ENCODE measurements at regions of chr4 and their contacts with region 1.

Region 1: GRCh38 chr4:25986807-25987206 is 72.8 kb downstream of the SMIM20 start:
- DNase-seq: no peak
- ATAC-seq: no peak
- H3K4me3 Mint-ChIP-seq: no peak overlapping the region
- H3K27ac Mint-ChIP-seq: no peak overlapping the region
- H3K4me1 Mint-ChIP-seq: no peaks in the 10 kb centered on the region
- H3K27me3 Mint-ChIP-seq: peaks cover 6% of the 10 kb centered on the region
- CTCF ChIP-seq: no peak

Region 2: DNA sequence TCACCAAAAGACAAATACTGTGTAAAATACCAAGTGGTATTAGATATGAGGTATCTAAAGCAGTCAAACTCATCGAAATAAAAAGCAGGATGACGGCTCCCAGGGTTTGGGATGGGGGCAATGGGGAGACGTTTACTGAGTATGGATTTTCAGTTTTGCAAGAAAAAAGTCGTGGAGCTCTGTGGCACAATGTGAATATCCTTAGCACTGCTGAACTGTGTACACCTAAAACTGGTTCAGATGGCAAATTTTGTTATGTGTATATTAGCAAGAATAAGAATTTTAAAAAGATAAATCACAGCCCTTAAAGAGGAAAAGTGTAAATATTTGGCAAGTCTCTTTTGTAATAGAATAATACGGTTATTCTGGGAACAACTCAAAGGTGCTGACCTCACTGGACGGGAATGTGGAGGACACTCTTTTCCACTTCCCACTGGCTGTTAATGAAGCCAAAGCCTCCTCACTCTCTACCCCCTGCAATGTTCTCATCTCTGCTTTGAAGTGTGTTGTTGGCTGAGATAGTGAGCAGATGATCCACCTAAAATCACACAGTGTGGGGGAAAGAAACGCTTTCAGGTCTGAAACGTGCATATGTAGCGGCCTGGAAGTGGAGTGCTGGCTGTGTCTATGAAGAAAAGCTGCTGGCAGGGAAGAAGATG is 173.2 kb before region 1 on chr4:
- CTCF ChIA-PET with region 1: no interaction called
- POLR2A ChIA-PET with region 1: no interaction called
- intact Hi-C with region 1: no loop called
- DNase-seq: no peak
- ATAC-seq: no peak
- H3K4me3 Mint-ChIP-seq: no peak overlapping the region
- H3K27ac Mint-ChIP-seq: no peak overlapping the region
- H3K4me1 Mint-ChIP-seq: no peaks in the 10 kb centered on the region
- H3K27me3 Mint-ChIP-seq: no peaks in the 10 kb centered on the region
- CTCF ChIP-seq: no peak

Region 3: GRCh38 chr4:25948051-25948450 is 38.8 kb before region 1 on chr4:
- CTCF ChIA-PET with region 1: interaction called, 12 read pairs
- POLR2A ChIA-PET with region 1: no interaction called
- intact Hi-C with region 1: no loop called
- DNase-seq: no peak
- ATAC-seq: no peak
- H3K4me3 Mint-ChIP-seq: no peak overlapping the region
- H3K27ac Mint-ChIP-seq: no peak overlapping the region
- H3K4me1 Mint-ChIP-seq: peaks cover 9% of the 10 kb centered on the region
- H3K27me3 Mint-ChIP-seq: peaks cover 33% of the 10 kb centered on the region
- CTCF ChIP-seq: no peak

Region 4: GRCh38 chr4:25970226-25970675 is 16.6 kb before region 1 on chr4:
- CTCF ChIA-PET with region 1: interaction called, 20 read pairs
- POLR2A ChIA-PET with region 1: no interaction called
- intact Hi-C with region 1: no loop called
- DNase-seq: no peak
- ATAC-seq: no peak
- H3K4me3 Mint-ChIP-seq: no peak overlapping the region
- H3K27ac Mint-ChIP-seq: no peak overlapping the region
- H3K4me1 Mint-ChIP-seq: no peaks in the 10 kb centered on the region
- H3K27me3 Mint-ChIP-seq: peaks cover 8% of the 10 kb centered on the region
- CTCF ChIP-seq: no peak

Region 5: DNA sequence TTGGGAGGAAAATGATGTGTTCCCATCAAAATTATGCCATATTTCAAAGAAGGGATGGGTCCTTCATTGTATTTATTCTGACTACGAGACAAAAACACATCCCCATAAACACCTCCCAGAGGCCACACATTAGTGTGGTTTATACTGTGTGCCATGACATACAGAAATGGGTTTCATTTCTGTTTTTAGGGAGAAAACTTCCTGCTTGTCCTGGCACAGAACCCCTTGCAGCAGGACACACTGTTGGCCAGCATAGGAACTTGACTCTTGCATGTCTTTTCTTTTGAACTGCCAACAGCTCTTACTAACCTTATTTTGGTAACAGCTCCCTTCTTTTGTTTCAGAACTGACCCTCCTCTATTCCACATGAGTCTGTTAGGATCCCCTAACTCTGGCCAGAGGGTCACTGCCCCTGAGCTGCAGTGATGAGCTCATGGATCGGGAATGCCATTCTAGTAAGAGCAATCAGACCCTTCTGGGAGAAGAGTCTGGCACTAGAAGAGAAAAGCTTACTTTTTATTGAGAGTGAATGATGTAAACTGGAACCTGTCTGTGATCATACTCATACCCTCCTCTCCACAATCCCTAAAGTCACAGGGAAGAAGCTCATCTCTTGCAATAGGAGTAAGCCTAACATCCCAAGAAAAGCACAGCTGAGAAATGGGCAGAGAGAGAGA is 13.6 kb after region 1 on chr4:
- CTCF ChIA-PET with region 1: interaction called, 28 read pairs
- POLR2A ChIA-PET with region 1: interaction called, 9 read pairs
- intact Hi-C with region 1: no loop called
- DNase-seq: no peak
- ATAC-seq: no peak
- H3K4me3 Mint-ChIP-seq: no peak overlapping the region
- H3K27ac Mint-ChIP-seq: no peak overlapping the region
- H3K4me1 Mint-ChIP-seq: no peaks in the 10 kb centered on the region
- H3K27me3 Mint-ChIP-seq: peaks cover 6% of the 10 kb centered on the region
- CTCF ChIP-seq: no peak

Region 6: GRCh38 chr4:26404743-26405206 is 418.0 kb after region 1 on chr4:
- CTCF ChIA-PET with region 1: interaction called, 15 read pairs
- POLR2A ChIA-PET with region 1: no interaction called
- intact Hi-C with region 1: no loop called
- DNase-seq: no peak
- ATAC-seq: no peak
- H3K4me3 Mint-ChIP-seq: no peak overlapping the region
- H3K27ac Mint-ChIP-seq: peak overlapping the region; percentile 40
- H3K4me1 Mint-ChIP-seq: peaks cover 23% of the 10 kb centered on the region
- H3K27me3 Mint-ChIP-seq: no peaks in the 10 kb centered on the region
- CTCF ChIP-seq: no peak

Region 7: GRCh38 chr4:26410385-26411293 is 423.8 kb after region 1 on chr4:
- CTCF ChIA-PET with region 1: interaction called, 30 read pairs
- POLR2A ChIA-PET with region 1: no interaction called
- intact Hi-C with region 1: no loop called
- DNase-seq: peak; percentile 33
- ATAC-seq: peak; percentile 61
- H3K4me3 Mint-ChIP-seq: no peak overlapping the region
- H3K27ac Mint-ChIP-seq: no peak overlapping the region
- H3K4me1 Mint-ChIP-seq: peaks cover 7% of the 10 kb centered on the region
- H3K27me3 Mint-ChIP-seq: no peaks in the 10 kb centered on the region
- CTCF ChIP-seq: peak; percentile 85

Measured in activated CD8-positive, alpha-beta T cell treated with anti-CD3 and anti-CD28 coated beads for 36 hours (primary cell).